Left cardiac atrium (tissue), 4 donors: ENCODE measurements at regions of chr14 and their contacts with region 1.

Region 1: DNA sequence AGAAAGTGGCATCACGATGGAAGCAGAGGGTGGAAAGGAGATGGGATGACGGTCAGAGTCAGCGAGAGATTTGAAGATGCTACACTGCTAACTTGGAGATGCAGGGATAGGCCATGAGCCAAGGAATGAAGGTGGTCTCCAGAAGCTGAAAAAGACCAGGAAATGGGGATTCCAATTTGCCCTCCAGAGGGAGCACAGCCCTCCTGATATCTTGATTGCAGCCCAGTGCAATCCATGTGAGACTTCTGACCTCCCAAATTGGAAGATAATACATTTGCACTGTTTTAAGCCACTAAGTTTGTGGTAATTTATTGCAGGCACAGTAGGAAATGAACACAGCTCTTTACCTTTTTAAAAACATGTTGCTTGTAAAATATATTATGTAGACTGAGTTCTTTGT is 549.5 kb downstream of the VRK1 start:
- DNase-seq: no peak
- ATAC-seq: no peak

Region 2: DNA sequence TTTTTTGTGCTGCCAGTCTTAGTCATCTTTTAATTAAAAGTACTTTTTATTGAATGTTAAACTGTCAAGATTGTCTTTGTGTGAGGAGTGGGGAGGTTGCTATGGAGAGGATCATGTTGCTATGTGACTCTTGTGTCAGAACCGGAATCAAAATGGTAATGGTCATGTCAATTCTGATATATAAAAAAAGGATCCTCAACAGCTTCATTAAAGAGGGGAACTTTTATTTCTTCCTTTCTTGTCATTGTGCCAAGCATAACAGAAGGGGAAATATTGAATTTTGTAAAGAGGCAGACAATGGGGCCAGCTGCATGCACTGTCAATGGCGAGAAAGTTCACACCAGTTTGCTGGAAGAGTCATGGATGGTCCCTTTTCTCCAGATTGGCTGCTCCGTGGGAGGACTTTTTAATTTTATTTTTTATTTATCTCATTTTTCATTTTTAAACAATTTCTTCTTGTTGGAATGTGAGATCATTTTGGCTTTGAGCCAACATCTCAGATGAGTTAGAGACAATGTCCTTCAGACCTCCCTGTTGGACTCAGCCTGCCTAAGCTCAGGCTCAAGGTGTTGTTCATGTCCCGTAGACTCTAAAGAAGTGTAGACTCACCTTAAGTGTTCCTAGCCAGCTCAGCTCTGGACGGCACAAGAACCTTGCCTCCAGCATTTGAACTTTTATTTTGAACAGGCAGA is 15.4 kb after region 1 on chr14:
- intact Hi-C with region 1: loop called in 1 of 2 experiments (anchors 1 kb)
- DNase-seq: no peak
- ATAC-seq: no peak